IMR-90 (cell line): ENCODE measurements at regions of chr4 and their contacts with region 1.

Region 1: GRCh38 chr4:38141808-38142500 is 181.8 kb downstream of the PTTG2 start:
- DNase-seq: peak; percentile 86
- ATAC-seq: peak; percentile 69
- H3K4me3 ChIP-seq: no peak overlapping the region
- H3K27ac ChIP-seq: no peak overlapping the region
- H3K4me1 ChIP-seq: peaks cover 27% of the 10 kb centered on the region
- H3K27me3 ChIP-seq: no peaks in the 10 kb centered on the region
- CTCF ChIP-seq: no peak
- POLR2A ChIP-seq: no peak
- RAD21 ChIP-seq: no peak

Region 2: GRCh38 chr4:38109896-38110295 is 32.1 kb before region 1 on chr4:
- CTCF ChIA-PET with region 1: no interaction called
- POLR2A ChIA-PET with region 1: no interaction called
- dilution Hi-C with region 1: no loop called
- in situ Hi-C with region 1: no loop called
- intact Hi-C with region 1: loop called (anchors 2 kb)
- DNase-seq: no peak
- ATAC-seq: peak; percentile 40
- H3K4me3 ChIP-seq: no peak overlapping the region
- H3K27ac ChIP-seq: no peak overlapping the region
- H3K4me1 ChIP-seq: peaks cover 17% of the 10 kb centered on the region
- H3K27me3 ChIP-seq: no peaks in the 10 kb centered on the region
- CTCF ChIP-seq: no peak
- POLR2A ChIP-seq: no peak
- RAD21 ChIP-seq: no peak

Region 3: GRCh38 chr4:38160487-38161207 is 18.7 kb after region 1 on chr4:
- CTCF ChIA-PET with region 1: interaction called, 4 read pairs
- POLR2A ChIA-PET with region 1: no interaction called
- dilution Hi-C with region 1: no loop called
- in situ Hi-C with region 1: no loop called
- intact Hi-C with region 1: loop called (anchors 2 kb)
- DNase-seq: peak; percentile 99
- ATAC-seq: peak; percentile 86
- H3K4me3 ChIP-seq: no peak overlapping the region
- H3K27ac ChIP-seq: peak overlapping the region; percentile 93
- H3K4me1 ChIP-seq: peaks cover 16% of the 10 kb centered on the region
- H3K27me3 ChIP-seq: no peaks in the 10 kb centered on the region
- CTCF ChIP-seq: no peak
- POLR2A ChIP-seq: peak; percentile 64; the same call in 1 of the 2 replicates
- RAD21 ChIP-seq: peak; percentile 16; the same call in 1 of the 2 replicates